Gastrocnemius medialis (tissue), 4 donors: ENCODE measurements at regions of chr7 and their contacts with region 1.

Region 1: DNA sequence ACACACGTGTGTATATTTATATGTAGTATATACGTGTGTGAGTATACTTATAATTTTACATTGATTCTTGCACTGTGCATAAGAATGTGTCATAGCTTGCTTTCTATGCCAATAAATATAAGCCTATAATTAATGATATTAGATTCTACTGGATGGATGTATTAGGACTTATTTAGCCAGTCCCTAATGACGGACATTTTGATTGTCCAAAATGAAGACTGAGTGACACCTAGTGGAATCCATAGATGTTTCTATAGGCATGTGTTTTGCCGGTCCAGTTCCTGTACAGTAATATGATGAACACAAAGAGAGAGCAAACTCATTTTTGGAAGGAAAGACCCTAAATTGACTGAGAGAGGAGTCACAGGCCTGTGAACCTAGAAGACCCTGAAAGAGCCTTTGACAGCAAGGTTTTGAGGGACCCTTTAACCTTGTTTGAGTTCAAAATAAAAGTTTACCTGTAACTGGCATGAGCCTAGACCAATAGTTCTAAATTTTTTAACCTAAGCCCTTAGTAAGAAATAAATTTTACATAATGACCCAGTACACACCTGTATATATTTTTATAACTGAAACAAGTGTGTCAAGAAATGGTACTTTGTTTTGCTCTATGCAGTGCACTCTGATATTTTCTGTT is 42.4 kb upstream of the AGBL3 start:
- DNase-seq: no peak
- ATAC-seq: peak in 1 of 2 donors; percentile 38
- H3K4me3 ChIP-seq: no peak overlapping the region
- H3K27ac ChIP-seq: no peak overlapping the region
- H3K4me1 ChIP-seq: no peaks in the 10 kb centered on the region
- H3K27me3 ChIP-seq: no peaks in the 10 kb centered on the region
- CTCF ChIP-seq: peak in 2 of 5 experiments; percentile 14 to 35
- POLR2A ChIP-seq: no peak

Region 2: DNA sequence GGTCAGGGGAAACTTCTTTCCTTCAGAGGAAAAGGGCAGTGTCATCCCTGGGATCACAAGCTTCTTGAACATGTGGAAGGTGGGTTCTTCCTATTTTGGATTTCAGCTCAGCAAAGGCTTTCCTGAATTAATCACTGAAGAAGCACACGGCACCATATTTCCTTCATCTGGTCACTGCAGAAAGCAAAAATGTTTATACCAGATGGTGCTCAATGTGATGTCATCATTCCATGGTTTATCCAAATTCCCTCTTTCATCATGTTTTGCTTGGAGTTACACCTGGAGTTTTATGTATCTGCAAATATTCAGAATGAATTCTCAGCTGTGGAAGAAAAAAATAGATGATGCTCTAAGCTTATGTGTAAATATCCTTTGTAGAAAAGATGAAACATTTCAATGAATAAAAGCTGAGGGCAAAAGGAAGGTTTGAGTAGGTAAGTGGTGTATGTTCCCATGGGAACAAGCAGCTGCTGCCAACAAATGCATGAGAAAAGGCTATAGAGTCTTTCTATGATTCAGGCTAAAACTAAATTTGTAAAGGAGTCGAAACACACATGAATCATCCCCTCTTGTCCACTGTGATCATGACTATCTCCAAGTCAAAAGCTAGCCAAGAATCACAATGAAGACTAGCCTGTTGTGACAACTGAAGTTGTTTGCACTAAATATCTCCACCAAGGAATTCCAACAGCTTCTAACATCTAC is 324.1 kb before region 1 on chr7:
- in situ Hi-C with region 1: loop called in 1 of 4 experiments (anchors 10 kb)
- intact Hi-C with region 1: no loop called
- DNase-seq: no peak
- ATAC-seq: no peak
- H3K4me3 ChIP-seq: no peak overlapping the region
- H3K27ac ChIP-seq: no peak overlapping the region
- H3K4me1 ChIP-seq: no peaks in the 10 kb centered on the region
- H3K27me3 ChIP-seq: no peaks in the 10 kb centered on the region
- CTCF ChIP-seq: no peak
- POLR2A ChIP-seq: no peak

Region 3: GRCh38 chr7:134750083-134751062 is 193.5 kb before region 1 on chr7:
- in situ Hi-C with region 1: no loop called
- intact Hi-C with region 1: loop called (anchors 10 kb)
- DNase-seq: peak in 1 of 2 donors; percentile 15
- ATAC-seq: no peak
- H3K4me3 ChIP-seq: no peak overlapping the region
- H3K27ac ChIP-seq: no peak overlapping the region
- H3K4me1 ChIP-seq: no peaks in the 10 kb centered on the region
- H3K27me3 ChIP-seq: no peaks in the 10 kb centered on the region
- CTCF ChIP-seq: peak; percentile 12 to 58 (median 38)
- POLR2A ChIP-seq: no peak